ENCODE measurements at regions of chr11 and their contacts with region 1.

Region 1: DNA sequence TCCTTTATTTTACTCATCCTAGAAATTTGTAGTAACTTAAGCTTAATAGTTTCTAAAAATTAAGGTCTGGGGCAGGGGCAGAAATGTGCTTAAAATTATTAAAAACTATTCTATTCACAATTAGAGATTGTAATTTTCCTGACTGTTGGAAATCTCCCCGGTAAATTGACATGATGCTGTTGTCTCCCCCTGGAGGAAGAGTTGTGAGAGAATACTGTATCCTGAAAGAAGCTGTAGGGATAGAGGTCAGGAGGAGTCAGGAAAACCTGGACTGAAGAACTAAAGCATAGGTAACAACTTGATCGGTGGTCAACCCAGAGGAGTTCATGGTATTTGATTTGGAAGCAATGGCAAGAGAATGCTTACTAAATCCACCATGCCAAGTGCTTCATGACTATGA is 16.2 kb upstream of the ESAM start:
- DNase-seq: no peak
- ATAC-seq: no peak
- H3K4me3 ChIP-seq: no peak overlapping the region
- H3K27ac ChIP-seq: peak overlapping the region in 1 of 12 donors; percentile 0
- H3K4me1 ChIP-seq: peaks cover 0 to 4% (median 0%) of the 10 kb centered on the region in 12 donors
- H3K27me3 ChIP-seq: no peaks in the 10 kb centered on the region
- CTCF ChIP-seq: peak in 2 of 12 donors; percentile 12 to 23
- POLR2A ChIP-seq: no peak

Region 2: DNA sequence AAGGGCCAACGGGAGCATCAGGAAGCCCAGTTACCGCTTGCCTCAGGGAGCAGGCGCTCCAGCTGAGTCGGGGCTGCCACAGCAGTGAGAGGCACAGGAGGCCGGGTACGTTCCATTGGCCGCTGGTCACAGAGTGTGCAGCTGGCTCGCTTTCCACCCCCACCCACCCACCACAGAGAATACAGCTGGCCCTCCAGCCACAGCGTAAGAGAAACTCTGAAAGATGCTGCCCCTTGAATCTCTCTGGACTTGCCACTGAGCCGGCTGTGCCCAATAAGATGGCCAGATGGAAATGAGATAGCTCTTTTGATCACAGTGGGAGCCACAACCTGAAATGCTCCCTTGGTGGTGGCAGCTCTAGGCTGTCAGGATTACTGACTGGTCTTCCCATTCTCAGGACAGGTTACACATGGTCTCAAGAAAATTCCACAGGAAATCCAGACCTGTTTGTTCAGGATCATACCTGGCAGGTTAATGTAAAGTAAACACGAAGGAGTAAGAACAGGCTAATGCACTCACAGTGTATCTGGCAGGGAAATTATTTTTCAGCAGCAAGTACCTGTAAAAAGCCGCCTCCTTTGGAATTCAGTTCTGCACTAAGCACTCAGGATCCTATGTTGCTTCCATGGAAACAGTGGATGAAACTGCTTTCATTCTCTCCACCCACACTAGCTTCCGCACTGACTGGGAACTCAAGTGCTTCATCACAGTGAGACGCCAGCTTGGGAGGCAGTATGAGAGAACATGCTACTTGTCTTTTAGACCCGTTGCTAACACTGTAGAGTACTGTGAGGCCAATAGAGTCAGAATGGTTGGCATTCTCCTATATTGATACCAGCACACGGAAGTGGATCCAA is 121.3 kb before region 1 on chr11:
- intact Hi-C with region 1: loop called in 1 of 10 experiments (anchors 5 kb)
- DNase-seq: no peak
- ATAC-seq: no peak
- H3K4me3 ChIP-seq: no peak overlapping the region
- H3K27ac ChIP-seq: no peak overlapping the region
- H3K4me1 ChIP-seq: no peaks in the 10 kb centered on the region
- H3K27me3 ChIP-seq: no peaks in the 10 kb centered on the region
- CTCF ChIP-seq: no peak
- POLR2A ChIP-seq: no peak

Measured in heart left ventricle (tissue), 16 donors.